ENCODE measurements at regions of chr5 and their contacts with region 1.

Region 1: DNA sequence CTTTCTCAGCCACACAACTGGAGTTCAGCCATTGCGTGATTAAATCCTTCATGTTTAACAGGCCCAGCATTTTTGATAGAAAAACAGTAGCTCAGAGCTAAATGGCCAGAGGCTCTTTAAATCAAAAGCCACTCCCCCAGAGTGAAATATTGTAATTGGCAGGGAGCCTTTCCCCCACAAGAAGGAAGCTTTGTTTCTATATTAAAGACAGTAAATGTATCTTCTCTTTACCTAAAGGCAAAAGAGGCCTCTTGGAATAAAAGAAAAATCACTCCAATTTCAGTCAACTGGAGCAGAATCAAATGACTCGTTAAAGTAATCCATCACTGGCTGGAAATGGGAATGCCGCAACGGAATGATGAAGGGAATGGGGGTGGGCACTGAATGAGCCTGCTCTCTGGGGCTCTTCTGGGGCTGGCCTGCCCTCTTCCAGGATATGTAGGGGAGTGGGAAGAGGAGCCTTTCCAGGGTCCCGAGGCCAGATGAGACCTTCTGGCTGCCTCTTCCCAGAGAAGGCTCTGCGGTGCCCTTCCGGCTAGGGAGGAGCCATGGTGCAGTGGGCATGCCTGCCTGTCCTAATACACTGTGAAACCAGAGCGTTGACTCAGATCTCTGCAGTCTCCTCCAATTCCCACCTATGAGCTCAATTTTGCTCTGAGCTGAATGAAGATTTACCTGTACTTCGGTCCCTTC is 45.2 kb downstream of the ANKDD1B start:
- DNase-seq: no peak
- H3K4me3 ChIP-seq: peak overlapping the region; percentile 34 to 57 (median 56)
- H3K27ac ChIP-seq: peak overlapping the region; percentile 64 to 76 (median 73)
- H3K4me1 ChIP-seq: peaks cover 0 to 9% (median 2%) of the 10 kb centered on the region in 4 donors
- H3K27me3 ChIP-seq: no peaks in the 10 kb centered on the region
- CTCF ChIP-seq: no peak
- EP300 ChIP-seq: no peak
- POLR2A ChIP-seq: no peak

Region 2: DNA sequence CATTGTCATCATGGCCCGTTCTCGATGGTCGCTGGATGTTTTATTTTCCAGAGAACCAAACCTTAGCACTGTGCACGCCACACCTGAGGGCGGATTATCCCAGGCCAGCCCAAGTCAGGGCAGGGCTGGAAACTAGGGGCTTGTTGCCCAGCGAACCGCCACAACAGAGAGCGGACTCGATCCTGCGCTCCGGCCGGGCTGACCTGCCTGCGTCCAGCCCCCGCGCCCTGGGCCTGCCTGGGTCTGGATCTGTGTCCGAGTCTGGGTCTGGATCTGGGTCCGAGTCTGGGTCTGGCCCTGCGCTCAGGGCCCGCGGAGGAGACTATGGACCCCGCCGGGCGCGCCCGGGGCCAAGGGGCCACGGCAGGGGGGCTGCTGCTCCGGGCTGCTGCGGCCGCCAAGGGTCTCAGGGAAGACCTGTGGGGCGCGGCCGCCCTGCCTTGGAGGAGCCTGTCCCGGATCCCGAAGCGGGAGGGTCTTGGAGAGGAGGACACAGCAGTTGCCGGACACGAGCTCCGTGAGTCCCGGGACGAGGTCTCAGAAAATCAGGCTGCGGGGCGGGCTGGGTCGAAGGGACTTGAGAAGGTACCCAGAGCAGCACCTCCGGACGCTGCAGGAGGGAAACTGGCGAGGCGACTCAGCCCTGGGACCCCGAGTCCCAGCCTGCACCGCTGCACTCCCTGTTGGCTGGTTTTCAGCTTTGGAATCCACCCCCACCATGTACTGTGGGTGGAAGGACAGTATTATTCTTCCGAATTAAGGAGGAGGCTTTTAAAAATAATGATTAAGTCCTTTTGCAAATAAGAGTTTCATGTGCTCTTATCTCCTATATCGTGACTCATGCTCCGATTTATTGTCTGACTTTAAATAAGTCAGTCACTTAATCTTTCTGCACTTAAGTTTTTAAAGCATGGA is 44.9 kb before region 1 on chr5 and contains the start of gene ANKDD1B:
- intact Hi-C with region 1: loop called (anchors 5 kb)
- DNase-seq: peak; percentile 70
- H3K4me3 ChIP-seq: peak within 1 kb of the TSS; percentile 30 to 56 (median 54)
- H3K27ac ChIP-seq: peak within 1 kb of the TSS in 2 of 4 donors; percentile 33 to 56
- H3K4me1 ChIP-seq: peaks cover 0 to 18% (median 13%) of the 10 kb centered on the region in 4 donors
- H3K27me3 ChIP-seq: no peaks in the 10 kb centered on the region
- CTCF ChIP-seq: no peak
- EP300 ChIP-seq: no peak
- POLR2A ChIP-seq: no peak
- total RNA-seq, gene ANKDD1B: 0.36 to 0.66 TPM in 2 of 4 donors, not detected in the others

Region 3: DNA sequence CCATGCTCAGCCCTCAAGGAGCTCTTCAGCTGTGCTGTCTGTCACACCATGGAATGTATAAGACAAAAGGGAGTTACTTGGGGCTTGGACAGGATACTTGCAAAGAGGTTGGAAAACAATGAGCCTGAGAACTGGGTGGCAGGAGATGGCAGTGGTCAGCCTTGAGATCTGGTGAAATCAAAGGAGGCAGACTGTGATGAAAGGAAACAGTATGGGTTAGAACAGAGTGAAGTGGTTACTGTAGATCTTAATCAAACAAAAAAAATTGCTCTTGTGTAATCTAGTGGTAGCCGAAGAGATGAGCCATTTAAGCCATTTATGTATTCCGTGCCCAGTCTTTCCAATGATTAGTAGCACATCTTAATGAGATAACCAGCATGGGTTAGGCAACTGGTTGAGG is 568.9 kb after region 1 on chr5:
- intact Hi-C with region 1: no loop called
- DNase-seq: no peak
- H3K4me3 ChIP-seq: no peak overlapping the region
- H3K27ac ChIP-seq: no peak overlapping the region
- H3K4me1 ChIP-seq: no peaks in the 10 kb centered on the region
- H3K27me3 ChIP-seq: no peaks in the 10 kb centered on the region
- CTCF ChIP-seq: no peak
- EP300 ChIP-seq: no peak
- POLR2A ChIP-seq: no peak

Measured in sigmoid colon (tissue), 7 donors.